Astrocyte of the cerebellum (primary cell): ENCODE measurements at regions of chr6 and their contacts with region 1.

Region 1: GRCh38 chr6:31619805-31620585 is 520 bp upstream of the PRRC2A start:
- DNase-seq: peak; percentile 97
- H3K4me3 ChIP-seq: peak overlapping the region; percentile 96
- CTCF ChIP-seq: no peak

Region 2: GRCh38 chr6:31541658-31542521 is 78.1 kb before region 1 on chr6 and contains the start of gene DDX39B:
- in situ Hi-C with region 1: loop called (anchors 5 kb)
- DNase-seq: peak; percentile 95
- H3K4me3 ChIP-seq: peak within 1 kb of the TSS; percentile 94
- CTCF ChIP-seq: no peak